AG04449 (cell line): ENCODE measurements at regions of chr15 and their contacts with region 1.

Region 1: GRCh38 chr15:89760303-89761008 is 9.4 kb upstream of the MESP1 start:
- DNase-seq: no peak
- H3K4me3 ChIP-seq: no peak overlapping the region
- CTCF ChIP-seq: peak; percentile 99

Region 2: GRCh38 chr15:89776274-89777072 is 16.0 kb after region 1 on chr15 and contains the start of gene MESP2:
- CTCF ChIA-PET with region 1: interaction called, 176 read pairs
- POLR2A ChIA-PET with region 1: interaction called, 3 read pairs
- DNase-seq: no peak
- H3K4me3 ChIP-seq: peak within 1 kb of the TSS; percentile 55
- CTCF ChIP-seq: peak; percentile 54

Region 3: GRCh38 chr15:89828241-89829082 is 68.0 kb after region 1 on chr15:
- CTCF ChIA-PET with region 1: interaction called, 11 read pairs
- POLR2A ChIA-PET with region 1: no interaction called
- DNase-seq: no peak
- H3K4me3 ChIP-seq: no peak overlapping the region
- CTCF ChIP-seq: no peak

Region 4: GRCh38 chr15:89845305-89845893 is 84.9 kb after region 1 on chr15:
- CTCF ChIA-PET with region 1: interaction called, 29 read pairs
- POLR2A ChIA-PET with region 1: no interaction called
- DNase-seq: peak; percentile 68
- H3K4me3 ChIP-seq: no peak overlapping the region
- CTCF ChIP-seq: no peak

Region 5: DNA sequence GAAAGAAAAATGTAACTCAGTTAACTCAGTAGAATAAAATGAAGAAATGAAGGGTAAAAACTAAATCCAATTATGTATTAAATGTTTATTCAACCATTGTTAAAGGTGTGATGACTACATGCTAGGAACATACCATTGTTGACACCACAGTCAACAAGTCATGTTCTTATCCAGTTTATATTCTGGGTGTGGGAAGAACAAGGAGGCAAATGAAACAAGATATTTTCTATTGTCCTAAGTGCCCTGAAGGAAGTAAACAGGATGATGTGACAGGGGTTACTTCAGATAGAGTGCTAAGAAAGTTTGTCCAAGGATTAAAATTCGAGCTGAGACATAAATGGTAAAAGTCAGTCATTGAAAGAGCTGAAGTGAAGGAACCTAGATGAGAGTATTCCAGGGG is 120.3 kb after region 1 on chr15:
- CTCF ChIA-PET with region 1: interaction called, 842 read pairs
- POLR2A ChIA-PET with region 1: no interaction called
- DNase-seq: no peak
- H3K4me3 ChIP-seq: no peak overlapping the region
- CTCF ChIP-seq: no peak